Psoas muscle (tissue), 8 donors: ENCODE measurements at regions of chr3 and their contacts with region 1.

Region 1: DNA sequence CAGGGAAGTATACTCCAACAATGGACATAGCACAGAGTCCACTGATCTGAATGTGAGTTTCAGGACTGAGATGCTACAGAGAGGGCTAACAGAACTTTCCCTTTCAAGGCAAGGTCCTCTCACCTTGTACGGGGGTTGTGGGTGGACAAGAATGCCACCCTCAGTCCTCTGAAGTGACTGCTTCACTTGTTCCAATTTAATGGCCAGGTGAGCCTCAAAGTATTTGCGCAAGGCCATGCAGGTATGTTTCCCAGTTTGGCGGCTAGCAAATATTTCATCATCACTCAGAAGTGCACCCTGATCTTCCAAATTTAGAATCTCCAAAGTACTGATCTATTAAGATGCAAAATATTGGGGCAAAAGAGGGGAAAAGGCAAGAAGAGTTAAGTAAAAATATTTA is 38.1 kb downstream of the RBM15B start:
- DNase-seq: no peak
- ATAC-seq: no peak
- H3K4me3 ChIP-seq: no peak overlapping the region
- H3K27ac ChIP-seq: no peak overlapping the region
- H3K4me1 ChIP-seq: no peaks in the 10 kb centered on the region
- H3K27me3 ChIP-seq: no peaks in the 10 kb centered on the region
- CTCF ChIP-seq: no peak

Region 2: DNA sequence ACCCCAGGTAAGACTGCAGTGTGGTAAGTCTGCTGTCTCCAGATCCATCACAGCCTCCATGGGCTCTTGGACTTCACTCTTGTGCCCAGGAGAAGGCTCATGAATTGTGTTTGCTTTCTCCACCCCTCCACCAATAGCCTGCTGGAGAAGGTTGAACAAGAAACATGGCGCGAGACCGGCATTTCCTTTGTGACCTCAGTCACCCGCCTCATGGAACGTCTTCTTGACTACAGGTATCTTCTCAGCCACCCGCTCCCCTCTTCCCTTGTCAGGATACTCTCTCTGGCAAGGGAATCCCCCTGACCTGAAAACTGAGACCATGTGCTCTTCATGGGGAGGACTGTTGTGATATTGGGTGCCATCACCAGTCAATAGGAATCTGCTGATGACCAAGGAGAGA is 96.1 kb before region 1 on chr3:
- intact Hi-C with region 1: no loop called
- DNase-seq: no peak
- ATAC-seq: no peak
- H3K4me3 ChIP-seq: no peak overlapping the region
- H3K27ac ChIP-seq: no peak overlapping the region
- H3K4me1 ChIP-seq: no peaks in the 10 kb centered on the region
- H3K27me3 ChIP-seq: no peaks in the 10 kb centered on the region
- CTCF ChIP-seq: no peak

Region 3: GRCh38 chr3:51471775-51472652 is 42.9 kb after region 1 on chr3:
- intact Hi-C with region 1: loop called in 1 of 2 experiments (anchors 10 kb)
- DNase-seq: no peak
- ATAC-seq: no peak
- H3K4me3 ChIP-seq: no peak overlapping the region
- H3K27ac ChIP-seq: no peak overlapping the region
- H3K4me1 ChIP-seq: no peaks in the 10 kb centered on the region
- H3K27me3 ChIP-seq: no peaks in the 10 kb centered on the region
- CTCF ChIP-seq: no peak

Region 4: GRCh38 chr3:51637941-51638471 is 208.9 kb after region 1 on chr3:
- intact Hi-C with region 1: loop called in 1 of 2 experiments (anchors 10 kb)
- DNase-seq: no peak
- ATAC-seq: peak in 3 of 4 donors; percentile 30 to 72 (median 33)
- H3K4me3 ChIP-seq: no peak overlapping the region
- H3K27ac ChIP-seq: no peak overlapping the region
- H3K4me1 ChIP-seq: no peaks in the 10 kb centered on the region
- H3K27me3 ChIP-seq: no peaks in the 10 kb centered on the region
- CTCF ChIP-seq: peak; percentile 45

Region 5: GRCh38 chr3:51916418-51916817 is 487.3 kb after region 1 on chr3:
- intact Hi-C with region 1: no loop called
- DNase-seq: no peak
- ATAC-seq: no peak
- H3K4me3 ChIP-seq: no peak overlapping the region
- H3K27ac ChIP-seq: no peak overlapping the region
- H3K4me1 ChIP-seq: no peaks in the 10 kb centered on the region
- H3K27me3 ChIP-seq: no peaks in the 10 kb centered on the region
- CTCF ChIP-seq: no peak